Mucosa of descending colon (tissue), 3 donors: ENCODE measurements at regions of chr4 and their contacts with region 1.

Region 1: GRCh38 chr4:102827674-102828496 is 534 bp upstream of the UBE2D3 start:
- DNase-seq: peak; percentile 96 to 100 (median 99)
- ATAC-seq: peak; percentile 80
- H3K4me3 ChIP-seq: peak overlapping the region; percentile 96
- H3K4me1 ChIP-seq: peaks cover 13% of the 10 kb centered on the region
- CTCF ChIP-seq: no peak

Region 2: DNA sequence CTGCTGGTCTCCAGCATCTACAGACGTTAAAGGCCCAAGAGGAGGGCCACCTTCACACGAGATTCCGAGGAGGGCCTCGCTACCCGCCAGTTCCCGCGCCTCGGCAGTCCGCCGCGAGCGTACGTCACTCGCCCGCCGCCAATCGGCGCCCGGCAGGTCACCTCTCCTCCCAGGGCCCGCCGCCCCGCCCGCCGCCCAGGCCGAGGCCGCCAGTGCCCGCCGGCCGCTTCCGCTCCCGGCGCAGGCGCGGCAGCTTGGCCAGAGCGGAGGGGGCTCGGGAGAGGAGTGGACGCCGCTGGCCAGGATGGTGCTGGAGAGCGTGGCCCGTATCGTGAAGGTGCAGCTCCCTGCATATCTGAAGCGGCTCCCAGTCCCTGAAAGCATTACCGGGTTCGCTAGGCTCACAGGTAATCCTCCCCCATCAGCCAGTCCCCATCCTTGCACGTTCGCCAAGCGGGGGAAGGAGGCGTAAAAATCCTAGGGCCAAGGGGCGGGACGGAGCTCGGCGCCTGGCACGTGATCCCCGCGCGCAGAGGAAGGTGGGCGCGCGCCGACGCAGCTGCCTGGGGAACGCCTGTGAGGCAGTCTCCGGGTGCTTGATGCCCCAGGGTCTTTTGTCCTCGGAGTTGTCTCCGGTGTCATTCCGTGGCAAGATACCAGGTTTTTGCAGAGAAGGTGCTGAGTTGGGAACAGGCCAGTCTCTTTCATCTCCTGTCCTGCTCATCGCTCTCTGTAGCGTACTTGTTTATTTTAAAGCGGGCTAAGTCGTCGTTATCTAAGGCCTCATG is 41.1 kb after region 1 on chr4 and contains the start of gene CISD2:
- intact Hi-C with region 1: loop called in 1 of 2 experiments (anchors 2 kb)
- DNase-seq: peak; percentile 92 to 96 (median 95)
- ATAC-seq: peak; percentile 98
- H3K4me3 ChIP-seq: peak within 1 kb of the TSS; percentile 45
- H3K4me1 ChIP-seq: peaks cover 3% of the 10 kb centered on the region
- CTCF ChIP-seq: no peak
- total RNA-seq, gene CISD2: 22.5 to 24.5 (median 23.1) TPM